ENCODE measurements at regions of chr9 and their contacts with region 1.

Region 1: DNA sequence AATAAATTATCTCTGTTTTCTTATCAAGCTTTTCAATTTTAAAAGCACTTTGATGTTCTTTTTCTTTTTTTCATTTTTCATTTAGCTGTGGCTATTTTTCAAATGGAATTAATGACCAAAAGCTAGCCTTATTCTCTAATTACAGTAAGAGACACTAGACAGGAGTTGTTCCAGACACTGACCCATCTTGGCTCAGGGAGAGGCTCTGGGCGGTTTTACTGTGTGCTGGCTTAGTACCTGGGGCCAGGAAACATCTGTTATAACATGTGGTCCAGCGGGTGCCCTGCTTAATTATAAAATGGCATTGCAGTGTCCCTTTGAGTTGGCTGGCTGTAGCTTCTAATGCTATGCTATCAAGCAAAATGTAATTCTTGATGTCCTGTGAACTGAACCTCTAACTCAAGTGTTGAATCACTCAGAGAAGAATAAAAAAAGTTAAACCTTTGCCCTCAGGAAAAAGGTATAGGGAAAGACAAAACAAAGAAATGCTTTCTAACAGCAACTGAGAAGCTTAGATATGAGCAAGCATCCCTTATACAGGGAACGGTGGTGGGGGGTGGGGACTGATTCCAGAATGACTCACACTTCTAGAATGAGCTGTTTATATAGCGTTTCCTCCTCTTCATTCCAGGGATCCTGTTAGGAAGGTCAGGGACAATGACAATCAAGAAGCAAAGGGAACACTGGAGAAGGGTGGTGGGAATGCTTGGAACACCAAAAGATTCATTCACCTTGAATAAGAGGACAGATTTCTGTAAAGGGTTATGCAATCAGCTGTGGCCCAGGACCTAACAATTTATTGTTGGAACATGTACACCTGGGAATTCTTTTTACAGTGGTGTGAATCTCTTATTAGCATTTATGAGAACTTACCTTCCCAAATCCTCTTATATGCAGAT is 58.7 kb upstream of the NFIB start:
- DNase-seq: peak; percentile 69
- ATAC-seq: peak; percentile 93
- H3K4me3 ChIP-seq: no peak overlapping the region
- H3K27ac ChIP-seq: no peak overlapping the region
- H3K4me1 ChIP-seq: peaks cover 7% of the 10 kb centered on the region
- H3K27me3 ChIP-seq: peaks cover 8% of the 10 kb centered on the region
- CTCF ChIP-seq: no peak
- POLR2A ChIP-seq: no peak
- RAD21 ChIP-seq: no peak

Region 2: GRCh38 chr9:14080959-14081542 is 291.6 kb before region 1 on chr9:
- CTCF ChIA-PET with region 1: no interaction called
- POLR2A ChIA-PET with region 1: no interaction called
- dilution Hi-C with region 1: no loop called
- in situ Hi-C with region 1: no loop called
- intact Hi-C with region 1: no loop called
- DNase-seq: peak; percentile 48
- ATAC-seq: peak; percentile 14; the same call in 1 of the 2 replicates
- H3K4me3 ChIP-seq: no peak overlapping the region
- H3K27ac ChIP-seq: no peak overlapping the region
- H3K4me1 ChIP-seq: peaks cover 2% of the 10 kb centered on the region; the same call in 1 of the 2 replicates
- H3K27me3 ChIP-seq: peaks cover 2% of the 10 kb centered on the region; the same call in 1 of the 2 replicates
- CTCF ChIP-seq: no peak
- POLR2A ChIP-seq: no peak
- RAD21 ChIP-seq: no peak

Region 3: DNA sequence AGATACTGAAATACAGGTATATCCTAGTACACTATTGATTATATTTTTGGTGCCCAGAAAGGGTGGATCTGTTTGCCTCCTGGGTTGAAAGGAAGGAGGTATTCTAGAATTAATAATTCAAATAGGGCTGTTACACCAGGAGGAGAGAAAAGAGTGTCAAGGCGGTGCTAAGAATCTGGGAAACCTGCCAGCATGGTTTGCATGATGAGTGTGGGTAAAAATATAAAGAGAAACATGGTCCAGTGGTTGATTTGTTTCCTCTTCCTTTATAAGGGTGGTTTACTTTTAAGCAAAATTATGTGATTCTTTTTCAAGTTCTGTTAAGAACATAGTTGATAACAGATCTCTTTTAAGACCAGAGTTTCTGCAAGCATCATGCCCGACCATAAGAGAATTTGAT is 10.6 kb after region 1 on chr9:
- CTCF ChIA-PET with region 1: interaction called, 8 read pairs
- POLR2A ChIA-PET with region 1: interaction called, 24 read pairs
- dilution Hi-C with region 1: no loop called
- in situ Hi-C with region 1: no loop called
- intact Hi-C with region 1: no loop called
- DNase-seq: no peak
- ATAC-seq: no peak
- H3K4me3 ChIP-seq: no peak overlapping the region
- H3K27ac ChIP-seq: no peak overlapping the region
- H3K4me1 ChIP-seq: no peaks in the 10 kb centered on the region
- H3K27me3 ChIP-seq: peaks cover 31% of the 10 kb centered on the region
- CTCF ChIP-seq: no peak
- POLR2A ChIP-seq: no peak
- RAD21 ChIP-seq: no peak

Measured in IMR-90 (cell line).